ENCODE measurements at regions of chr17 and their contacts with region 1.

Region 1: GRCh38 chr17:6069539-6070429 is at the start of gene WSCD1:
- DNase-seq: no peak
- H3K4me3 Mint-ChIP-seq: peak within 1 kb of the TSS; percentile 72
- H3K27ac Mint-ChIP-seq: no peak within 1 kb of the TSS
- H3K4me1 Mint-ChIP-seq: peaks cover 10% of the 10 kb centered on the region
- H3K27me3 Mint-ChIP-seq: peaks cover 46% of the 10 kb centered on the region
- total RNA-seq, gene WSCD1: 0.50 to 0.53 TPM

Region 2: DNA sequence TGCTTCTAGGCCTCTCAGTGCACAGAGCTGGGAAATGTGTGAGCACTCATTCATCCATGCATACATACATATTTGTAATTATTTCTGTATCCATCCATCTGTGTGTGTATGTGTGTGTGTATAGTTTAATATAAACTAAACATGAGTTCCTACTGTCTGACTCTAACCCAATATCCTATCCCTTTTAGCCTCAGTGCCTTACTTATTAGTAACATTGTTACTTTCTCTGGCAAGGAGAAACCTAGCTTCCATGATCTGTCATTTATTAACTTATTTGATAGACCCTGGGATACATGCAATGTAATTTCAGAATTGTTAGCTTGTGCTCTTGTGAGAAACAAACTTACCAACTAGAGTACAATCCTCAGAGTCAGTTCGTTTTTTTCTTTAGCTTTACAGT is 58.6 kb before region 1 on chr17:
- CTCF ChIA-PET with region 1: no interaction called
- POLR2A ChIA-PET with region 1: no interaction called
- intact Hi-C with region 1: loop called (anchors 5 kb)
- DNase-seq: no peak
- H3K4me3 Mint-ChIP-seq: no peak overlapping the region
- H3K27ac Mint-ChIP-seq: no peak overlapping the region
- H3K4me1 Mint-ChIP-seq: no peaks in the 10 kb centered on the region
- H3K27me3 Mint-ChIP-seq: peaks cover 22% of the 10 kb centered on the region

Region 3: DNA sequence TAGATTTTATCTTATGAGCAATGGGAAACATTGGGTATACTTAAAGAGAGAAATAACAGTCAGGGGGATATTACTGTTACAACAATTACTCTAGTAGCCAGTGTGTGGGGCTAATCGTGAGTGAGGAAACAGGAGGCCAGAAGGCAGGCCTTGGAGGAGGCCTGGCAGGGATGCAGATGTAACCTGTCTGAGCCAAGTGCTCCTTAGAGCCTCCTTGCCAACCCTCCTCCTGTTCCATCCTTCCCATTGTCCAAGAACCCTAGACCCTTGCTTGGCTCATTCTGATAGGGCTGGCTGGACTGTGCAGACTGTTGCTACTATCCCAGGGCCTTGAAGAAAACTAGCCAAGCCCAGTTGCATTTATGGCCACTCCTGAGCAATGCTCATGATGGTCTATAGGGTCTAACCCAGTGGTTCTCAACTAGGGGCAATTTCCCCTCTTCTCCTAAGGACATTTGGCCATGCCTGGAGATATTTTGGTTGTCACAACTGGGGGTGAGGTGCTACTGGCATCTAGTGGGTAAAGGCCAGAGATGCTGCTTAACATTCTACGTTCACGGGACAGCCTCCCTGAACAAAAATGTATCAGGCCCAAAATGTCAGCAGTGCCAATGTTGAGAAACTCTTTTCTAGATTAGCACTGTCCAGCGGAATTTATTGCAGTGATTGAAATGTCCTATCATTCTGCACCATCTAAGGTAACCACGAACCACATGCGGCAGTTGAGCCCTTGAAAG is 24.0 kb before region 1 on chr17:
- CTCF ChIA-PET with region 1: no interaction called
- POLR2A ChIA-PET with region 1: no interaction called
- intact Hi-C with region 1: no loop called
- DNase-seq: no peak
- H3K4me3 Mint-ChIP-seq: no peak overlapping the region
- H3K27ac Mint-ChIP-seq: no peak overlapping the region
- H3K4me1 Mint-ChIP-seq: no peaks in the 10 kb centered on the region
- H3K27me3 Mint-ChIP-seq: no peaks in the 10 kb centered on the region

Region 4: DNA sequence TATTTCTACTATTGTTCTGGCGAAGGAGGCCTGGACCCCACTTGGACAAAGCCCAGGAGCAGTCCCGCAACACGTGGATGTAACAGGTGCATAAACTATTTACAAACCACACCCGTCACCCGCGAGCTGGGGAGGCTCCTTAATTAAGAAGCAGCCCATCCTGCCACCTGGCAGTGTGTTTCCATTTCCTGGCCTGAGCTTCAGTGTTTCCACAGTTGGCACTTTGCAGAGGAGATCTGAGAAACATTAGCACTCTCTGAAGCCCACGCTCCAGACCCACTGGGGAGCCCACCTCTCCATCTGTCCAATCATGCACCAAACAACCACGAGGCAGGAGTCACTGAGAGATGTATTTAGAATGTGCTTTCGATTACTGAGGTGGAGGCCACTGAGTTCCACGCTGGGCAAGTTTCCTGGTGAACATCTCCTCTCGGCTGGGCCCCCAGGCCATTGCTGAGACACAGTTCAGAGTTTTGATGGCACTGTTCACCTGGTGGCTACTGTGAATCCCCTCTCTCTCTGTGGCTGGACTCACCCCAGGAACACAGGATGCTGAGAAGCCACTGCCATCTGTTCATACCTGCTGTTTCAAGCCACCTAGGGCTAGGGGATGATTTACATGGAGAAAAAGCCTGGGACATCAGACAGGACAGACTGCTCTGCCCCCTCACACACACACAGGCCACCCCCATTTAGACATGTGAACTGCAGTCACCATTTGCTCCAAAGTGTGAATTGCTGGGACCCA is 236.0 kb after region 1 on chr17:
- CTCF ChIA-PET with region 1: no interaction called
- POLR2A ChIA-PET with region 1: no interaction called
- intact Hi-C with region 1: no loop called
- DNase-seq: no peak
- H3K4me3 Mint-ChIP-seq: no peak overlapping the region
- H3K27ac Mint-ChIP-seq: no peak overlapping the region
- H3K4me1 Mint-ChIP-seq: no peaks in the 10 kb centered on the region
- H3K27me3 Mint-ChIP-seq: peaks cover 28% of the 10 kb centered on the region

Measured in activated CD4-positive, alpha-beta memory T cell treated with anti-CD3 and anti-CD28 coated beads for 36 hours (primary cell).